PC-3 (cell line): ENCODE measurements at regions of chr1 and their contacts with region 1.

Region 1: GRCh38 chr1:161238039-161238473 is at the start of gene NR1I3:
- DNase-seq: no peak
- ATAC-seq: no peak
- H3K4me3 ChIP-seq: no peak within 1 kb of the TSS
- H3K27ac ChIP-seq: no peak within 1 kb of the TSS
- H3K4me1 ChIP-seq: peaks cover 9% of the 10 kb centered on the region
- H3K27me3 ChIP-seq: no peaks in the 10 kb centered on the region
- CTCF ChIP-seq: no peak
- total RNA-seq, gene NR1I3: not detected in 2 replicates

Region 2: DNA sequence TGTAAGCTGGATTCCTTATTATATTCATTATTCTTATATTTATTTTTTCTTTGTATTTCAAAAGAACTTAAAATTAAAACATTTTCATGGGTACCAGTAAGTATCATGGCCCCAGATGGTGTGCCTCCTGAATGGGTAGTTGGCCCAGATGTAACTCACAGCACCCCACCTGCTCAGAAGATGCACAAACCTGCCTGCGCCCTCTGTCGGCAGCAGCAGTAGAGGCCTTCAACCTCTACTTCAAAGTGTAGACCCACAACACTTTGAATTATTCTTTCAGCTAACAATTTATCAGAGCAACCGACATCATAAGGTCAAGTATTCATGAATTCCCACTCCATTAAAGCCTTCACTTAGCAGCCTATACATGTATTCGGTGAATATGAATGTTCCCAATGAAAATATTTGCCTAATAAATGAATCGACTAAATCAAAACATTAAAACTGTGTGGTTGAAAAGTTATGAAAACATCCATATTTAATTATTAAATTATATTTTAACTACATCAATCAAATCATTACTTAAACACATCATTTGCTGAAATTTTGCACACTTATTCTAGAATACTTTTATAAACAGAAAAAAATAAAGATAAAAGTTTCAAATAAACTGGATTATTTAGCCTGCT is 1231.6 kb before region 1 on chr1:
- CTCF ChIA-PET with region 1: no interaction called
- POLR2A ChIA-PET with region 1: no interaction called
- intact Hi-C with region 1: no loop called
- DNase-seq: peak; percentile 89
- ATAC-seq: peak; percentile 94
- H3K4me3 ChIP-seq: no peak overlapping the region
- H3K27ac ChIP-seq: no peak overlapping the region
- H3K4me1 ChIP-seq: no peaks in the 10 kb centered on the region; the same call in 1 of the 2 replicates
- H3K27me3 ChIP-seq: no peaks in the 10 kb centered on the region
- CTCF ChIP-seq: peak; percentile 97

Region 3: GRCh38 chr1:161192476-161193465 is 45.3 kb before region 1 on chr1:
- CTCF ChIA-PET with region 1: no interaction called
- POLR2A ChIA-PET with region 1: no interaction called
- intact Hi-C with region 1: no loop called
- DNase-seq: peak; percentile 85
- ATAC-seq: peak; percentile 92
- H3K4me3 ChIP-seq: no peak overlapping the region
- H3K27ac ChIP-seq: no peak overlapping the region
- H3K4me1 ChIP-seq: no peaks in the 10 kb centered on the region
- H3K27me3 ChIP-seq: no peaks in the 10 kb centered on the region
- CTCF ChIP-seq: peak; percentile 96

Region 4: DNA sequence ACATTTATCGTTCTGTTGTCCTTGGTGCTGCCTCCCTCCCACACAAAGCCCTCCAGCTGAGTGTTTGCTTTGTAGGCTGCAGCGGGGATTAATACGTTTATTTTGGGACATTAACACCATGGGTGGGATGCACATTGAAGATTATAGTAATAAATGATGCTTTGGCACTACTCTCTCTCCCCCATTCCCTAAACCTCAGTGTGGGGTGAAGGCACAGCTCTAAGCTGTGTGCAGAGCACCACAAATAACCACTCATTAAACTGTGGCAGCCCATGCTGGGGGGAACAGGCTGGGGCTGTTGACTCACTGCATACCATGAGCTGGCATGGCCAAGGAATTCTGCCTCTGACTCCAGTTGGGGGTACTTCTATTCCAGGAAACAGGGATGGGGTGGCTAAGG is 28.1 kb after region 1 on chr1:
- CTCF ChIA-PET with region 1: no interaction called
- POLR2A ChIA-PET with region 1: interaction called, 17 read pairs
- intact Hi-C with region 1: no loop called
- DNase-seq: peak; percentile 41
- ATAC-seq: peak; percentile 38; the same call in 1 of the 2 replicates
- H3K4me3 ChIP-seq: no peak overlapping the region
- H3K27ac ChIP-seq: no peak overlapping the region
- H3K4me1 ChIP-seq: no peaks in the 10 kb centered on the region; the same call in 1 of the 2 replicates
- H3K27me3 ChIP-seq: no peaks in the 10 kb centered on the region
- CTCF ChIP-seq: no peak

Region 5: DNA sequence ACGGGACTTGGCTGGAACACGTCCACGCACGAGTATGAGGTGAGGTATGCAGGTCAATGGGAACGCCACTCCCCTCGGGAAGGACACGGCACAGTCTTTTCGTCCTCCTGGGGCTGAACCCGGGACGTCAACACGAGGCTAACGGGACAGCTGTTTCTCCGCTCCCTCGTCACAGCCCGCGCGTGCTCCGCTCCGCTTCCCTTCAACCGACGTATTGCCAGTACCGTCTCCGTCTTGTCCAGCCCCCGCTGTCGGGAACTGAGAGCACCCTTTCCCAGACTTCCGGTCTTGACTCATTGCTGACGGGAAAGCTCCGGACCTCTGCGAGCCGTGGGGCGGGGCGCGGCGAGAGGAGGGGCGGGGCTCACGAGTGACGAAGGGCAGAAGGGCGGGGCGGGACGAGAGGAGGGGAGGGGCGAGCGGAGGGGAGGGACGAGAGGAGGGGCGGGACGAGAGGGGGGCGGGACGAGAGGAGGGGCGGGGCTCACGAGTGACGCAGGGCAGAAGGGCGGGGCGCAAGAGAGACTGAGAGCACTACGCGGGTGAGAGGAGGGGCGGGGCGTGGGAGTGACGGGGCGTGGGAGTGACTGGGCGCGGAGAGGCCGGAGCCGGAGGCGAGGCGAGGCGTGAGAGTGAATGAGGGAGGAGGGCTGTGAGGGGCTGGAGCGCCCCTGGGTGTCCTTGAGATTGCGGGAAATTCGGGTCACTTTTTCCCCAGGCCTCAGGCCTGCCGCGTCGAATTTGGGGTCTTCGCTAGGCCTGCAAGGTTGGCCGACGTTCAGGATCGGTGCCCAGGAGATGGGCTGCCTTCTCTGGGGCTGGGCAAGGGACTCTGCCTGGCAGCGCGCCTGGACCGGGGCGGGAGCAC is 151.9 kb after region 1 on chr1:
- CTCF ChIA-PET with region 1: no interaction called
- POLR2A ChIA-PET with region 1: interaction called, 10 read pairs
- intact Hi-C with region 1: no loop called
- DNase-seq: peak; percentile 98
- ATAC-seq: peak; percentile 87
- H3K4me3 ChIP-seq: peak overlapping the region; percentile 86
- H3K27ac ChIP-seq: peak overlapping the region; percentile 70
- H3K4me1 ChIP-seq: peaks cover 12% of the 10 kb centered on the region
- H3K27me3 ChIP-seq: no peaks in the 10 kb centered on the region
- CTCF ChIP-seq: no peak